Sciatic nerve (tissue), 2 donors: ENCODE measurements at regions of chr3 and their contacts with region 1.

Region 1: DNA sequence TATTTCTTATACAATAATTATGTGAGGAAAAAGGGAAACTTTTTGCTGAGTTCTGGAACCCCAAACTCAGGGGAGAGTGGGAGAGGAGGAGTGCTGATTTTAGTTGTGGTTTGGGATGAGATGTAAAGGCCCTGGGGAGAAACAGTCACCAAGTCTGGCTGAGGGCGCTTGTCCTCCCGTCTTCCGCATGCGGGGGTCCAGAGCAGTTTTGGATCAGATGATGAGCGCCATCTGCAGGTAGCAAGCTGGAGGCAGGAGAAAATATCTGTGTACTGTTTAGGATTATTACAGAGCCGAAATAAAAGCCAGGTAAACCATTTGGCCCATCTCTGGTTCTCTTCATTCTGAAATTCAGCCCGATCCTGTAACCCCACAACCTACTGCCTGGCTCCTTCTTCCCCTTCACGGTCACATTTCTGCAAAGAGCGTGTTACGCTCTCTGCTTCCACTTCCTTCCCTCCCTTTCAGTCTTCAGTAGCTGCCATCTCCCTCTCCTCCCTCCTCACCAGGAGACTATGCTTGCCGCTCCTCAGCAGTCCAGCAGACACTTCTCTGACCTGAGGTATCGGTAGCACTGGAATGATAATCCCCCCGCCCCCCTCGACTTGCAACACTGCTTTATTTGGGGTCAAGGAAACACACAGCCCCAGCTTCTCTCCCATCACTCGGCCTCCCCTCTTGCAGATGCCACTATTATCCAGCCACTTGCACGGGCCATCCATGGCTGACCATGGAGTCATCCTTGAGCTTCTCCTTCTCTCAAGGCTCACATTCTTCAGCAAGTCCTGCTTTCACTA is 1.4 kb upstream of the PARP14 start:
- DNase-seq: peak; percentile 90
- ATAC-seq: peak; percentile 89

Region 2: DNA sequence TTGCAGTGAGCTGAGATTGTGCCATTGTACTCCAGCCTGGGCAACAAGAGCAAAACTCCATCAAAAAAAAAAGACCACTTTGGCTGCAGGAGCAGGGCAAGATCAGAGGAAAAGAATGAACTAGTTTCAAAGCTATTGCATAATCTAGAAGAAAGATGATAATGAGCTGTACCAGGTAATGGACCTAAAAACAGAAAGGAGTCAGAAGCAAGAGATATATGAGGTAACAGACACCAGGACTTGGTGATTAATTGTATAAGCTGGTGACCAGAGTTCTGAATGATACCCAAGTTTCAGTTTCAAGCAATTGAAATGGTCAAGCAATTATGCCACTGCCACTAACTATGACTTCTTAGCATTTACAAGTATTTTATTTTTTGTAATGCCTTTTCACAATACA is 1136.4 kb before region 1 on chr3:
- intact Hi-C with region 1: loop called (anchors 5 kb)
- DNase-seq: no peak
- ATAC-seq: no peak

Region 3: GRCh38 chr3:122383771-122384697 is 295.2 kb before region 1 on chr3 and contains the start of gene FAM162A:
- intact Hi-C with region 1: loop called (anchors 5 kb)
- DNase-seq: peak; percentile 95
- ATAC-seq: peak; percentile 99
- total RNA-seq, gene FAM162A: 36.1 TPM

Region 4: DNA sequence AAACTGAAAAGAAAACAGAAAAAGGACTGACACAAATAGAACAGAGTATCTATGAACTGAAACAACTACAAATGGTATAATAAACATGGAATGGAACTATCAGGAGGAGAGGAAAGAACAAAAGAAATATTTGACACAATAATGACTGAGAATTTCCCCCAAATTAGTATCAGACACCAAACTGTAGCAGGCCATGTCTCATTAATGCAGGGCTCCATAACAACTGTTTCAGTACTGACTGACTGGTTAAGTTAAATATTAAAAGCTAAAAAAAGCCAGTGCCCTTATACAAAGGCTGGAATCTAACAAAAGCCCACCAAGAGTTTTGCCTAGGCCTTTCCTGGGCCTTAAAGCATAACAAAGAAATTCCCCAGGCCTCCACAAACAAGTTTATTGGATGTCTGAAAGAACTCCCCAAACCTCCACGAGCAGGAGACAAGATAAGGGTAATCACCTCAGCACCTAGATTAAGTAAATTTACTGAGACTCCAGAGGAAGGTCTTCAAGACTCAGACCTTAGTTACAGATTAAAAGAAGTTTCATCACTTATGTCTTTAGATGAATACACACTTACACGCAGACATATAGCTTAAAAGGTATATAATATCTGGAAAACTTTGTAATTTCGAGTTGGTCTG is 210.3 kb before region 1 on chr3:
- intact Hi-C with region 1: loop called (anchors 10 kb)
- DNase-seq: no peak
- ATAC-seq: no peak

Region 5: GRCh38 chr3:122564155-122564912 is 114.9 kb before region 1 on chr3 and contains the starts of genes DTX3L and PARP9:
- intact Hi-C with region 1: loop called (anchors 5 kb)
- DNase-seq: peak; percentile 89
- ATAC-seq: peak; percentile 98
- total RNA-seq, gene DTX3L: 31.5 TPM
- total RNA-seq, gene PARP9: 33.9 TPM